Endothelial cell of umbilical vein (primary cell): ENCODE measurements at regions of chr11 and their contacts with region 1.

Region 1: GRCh38 chr11:65711785-65712632 is at the start of gene KAT5:
- DNase-seq: peak; percentile 98
- H3K4me3 ChIP-seq: peak within 1 kb of the TSS; percentile 19 to 66 (median 49)
- H3K27ac ChIP-seq: peak within 1 kb of the TSS; percentile 89
- H3K4me1 ChIP-seq: peaks cover 6% of the 10 kb centered on the region
- H3K27me3 ChIP-seq: no peaks in the 10 kb centered on the region
- CTCF ChIP-seq: peak; percentile 93 to 97
- POLR2A ChIP-seq: no peak
- total RNA-seq, gene KAT5: 48.8 and 50.2 TPM in 2 replicates

Region 2: GRCh38 chr11:65497141-65498041 is 214.6 kb before region 1 on chr11:
- CTCF ChIA-PET with region 1: no interaction called
- POLR2A ChIA-PET with region 1: no interaction called
- dilution Hi-C with region 1: no loop called
- intact Hi-C with region 1: no loop called
- DNase-seq: peak; percentile 99
- H3K4me3 ChIP-seq: peak overlapping the region; percentile 0 to 91 (median 48)
- H3K27ac ChIP-seq: peak overlapping the region; percentile 95
- H3K4me1 ChIP-seq: peaks cover 45% of the 10 kb centered on the region
- H3K27me3 ChIP-seq: no peaks in the 10 kb centered on the region
- CTCF ChIP-seq: no peak
- POLR2A ChIP-seq: peak; percentile 98

Region 3: DNA sequence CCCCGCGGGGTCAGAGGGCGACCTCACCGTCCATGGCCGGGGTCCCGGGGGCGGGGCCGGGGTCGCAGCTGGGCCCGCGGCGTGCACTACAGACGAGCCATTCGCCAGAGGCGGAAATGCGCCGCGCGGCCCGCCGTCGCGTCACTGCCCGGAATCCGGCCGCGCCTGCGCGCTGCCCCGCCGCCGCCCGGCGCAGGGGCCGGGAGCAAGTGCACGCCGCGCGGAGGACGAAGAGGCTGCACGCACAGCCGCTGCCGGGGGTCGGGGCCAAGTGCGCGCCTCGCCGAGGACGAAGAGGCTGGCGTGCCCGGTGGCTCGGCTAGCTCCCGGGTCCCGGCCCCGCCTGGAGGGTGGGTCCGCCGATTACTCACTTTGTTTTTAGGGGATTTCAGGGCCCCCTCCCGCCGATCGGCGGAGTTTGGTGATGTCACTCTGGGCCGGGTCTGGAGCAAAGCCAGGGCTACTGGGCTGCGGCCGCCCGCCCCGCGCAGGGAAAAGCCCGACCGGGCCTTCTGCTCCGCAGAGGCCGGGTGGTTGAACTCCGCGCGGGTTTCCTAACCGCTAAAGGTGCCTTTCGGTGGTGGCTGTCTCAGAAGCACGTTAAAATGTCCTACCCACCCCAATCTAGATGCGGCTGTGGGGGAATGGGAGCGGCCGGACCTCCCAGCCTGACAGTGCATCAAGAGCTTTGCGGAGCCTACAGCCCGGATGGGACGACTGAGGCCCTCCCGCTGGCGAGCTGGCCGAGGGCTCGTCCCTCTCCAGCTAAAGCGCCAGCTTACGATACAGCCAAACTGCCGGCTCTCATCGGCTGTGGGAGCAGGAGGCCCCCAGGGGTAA is 49.0 kb before region 1 on chr11 and contains the start of gene RELA:
- CTCF ChIA-PET with region 1: interaction called, 4 read pairs
- POLR2A ChIA-PET with region 1: interaction called, 3 read pairs
- dilution Hi-C with region 1: no loop called
- intact Hi-C with region 1: loop called (anchors 1 kb)
- DNase-seq: peak; percentile 92
- H3K4me3 ChIP-seq: peak within 1 kb of the TSS; percentile 34 to 94 (median 77)
- H3K27ac ChIP-seq: peak within 1 kb of the TSS; percentile 91
- H3K4me1 ChIP-seq: peaks cover 18% of the 10 kb centered on the region
- H3K27me3 ChIP-seq: no peaks in the 10 kb centered on the region
- CTCF ChIP-seq: no peak
- POLR2A ChIP-seq: peak; percentile 87
- total RNA-seq, gene RELA: 105 and 106 TPM in 2 replicates

Region 4: DNA sequence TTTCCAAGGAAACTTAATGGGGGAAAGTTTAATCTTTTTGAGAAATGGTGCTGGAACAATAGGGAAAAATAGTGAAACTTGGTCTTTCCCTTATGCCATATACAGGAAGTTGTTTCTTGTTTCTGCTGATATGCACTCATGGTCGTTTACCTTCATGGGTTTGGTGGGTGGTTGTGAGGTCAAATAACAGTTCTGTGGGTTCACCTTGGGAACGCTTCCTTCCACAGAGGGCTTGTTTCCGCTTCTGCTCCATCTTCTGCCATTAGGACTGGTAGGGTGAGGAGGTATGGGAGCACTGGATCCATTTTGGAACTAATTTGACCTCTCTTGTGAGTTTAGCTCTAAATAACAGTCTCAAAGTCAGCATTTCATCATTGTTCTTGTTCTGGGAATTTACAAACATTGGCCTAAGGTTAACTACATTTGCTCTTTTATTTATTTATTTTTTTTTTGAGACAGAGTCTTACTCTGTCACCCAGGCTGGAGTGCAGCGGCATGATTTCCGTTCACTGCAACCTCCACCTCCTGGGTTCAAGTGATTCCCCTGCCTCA is 31.7 kb before region 1 on chr11:
- CTCF ChIA-PET with region 1: interaction called, 10 read pairs
- POLR2A ChIA-PET with region 1: no interaction called
- dilution Hi-C with region 1: no loop called
- intact Hi-C with region 1: no loop called
- DNase-seq: no peak
- H3K4me3 ChIP-seq: no peak overlapping the region
- H3K27ac ChIP-seq: no peak overlapping the region
- H3K4me1 ChIP-seq: no peaks in the 10 kb centered on the region
- H3K27me3 ChIP-seq: peaks cover 11% of the 10 kb centered on the region in 2 experiments
- CTCF ChIP-seq: no peak
- POLR2A ChIP-seq: no peak

Region 5: DNA sequence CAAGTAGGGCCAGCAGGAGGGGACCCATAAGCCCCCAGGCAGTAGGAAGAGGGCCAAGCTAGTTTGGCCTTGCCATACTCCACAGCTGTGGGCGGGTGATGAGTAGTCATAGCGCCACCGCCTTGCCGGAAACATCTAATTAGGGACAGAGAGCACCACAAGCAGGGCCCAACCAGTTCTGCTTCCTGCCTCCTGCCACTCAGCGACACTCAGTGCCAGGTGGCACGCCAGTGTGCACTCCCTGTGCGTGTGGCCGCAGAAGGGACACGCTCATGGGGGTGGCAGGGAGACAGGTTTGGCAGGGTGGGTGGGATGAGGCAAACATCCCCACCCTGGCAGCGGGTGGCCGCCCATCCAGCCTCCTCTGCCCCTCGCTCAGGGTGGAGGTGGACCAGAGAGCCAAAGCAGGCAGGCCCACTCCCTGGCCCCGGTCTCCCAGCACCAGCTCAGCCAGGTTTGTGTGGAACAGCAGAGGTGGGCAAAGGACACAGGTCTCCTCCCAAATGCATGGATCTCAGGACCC is 79.7 kb after region 1 on chr11:
- CTCF ChIA-PET with region 1: no interaction called
- POLR2A ChIA-PET with region 1: no interaction called
- dilution Hi-C with region 1: no loop called
- intact Hi-C with region 1: no loop called
- DNase-seq: no peak
- H3K4me3 ChIP-seq: no peak overlapping the region
- H3K27ac ChIP-seq: no peak overlapping the region
- H3K4me1 ChIP-seq: no peaks in the 10 kb centered on the region
- H3K27me3 ChIP-seq: peaks cover 25 to 26% of the 10 kb centered on the region in 2 experiments
- CTCF ChIP-seq: no peak
- POLR2A ChIP-seq: no peak

Region 6: DNA sequence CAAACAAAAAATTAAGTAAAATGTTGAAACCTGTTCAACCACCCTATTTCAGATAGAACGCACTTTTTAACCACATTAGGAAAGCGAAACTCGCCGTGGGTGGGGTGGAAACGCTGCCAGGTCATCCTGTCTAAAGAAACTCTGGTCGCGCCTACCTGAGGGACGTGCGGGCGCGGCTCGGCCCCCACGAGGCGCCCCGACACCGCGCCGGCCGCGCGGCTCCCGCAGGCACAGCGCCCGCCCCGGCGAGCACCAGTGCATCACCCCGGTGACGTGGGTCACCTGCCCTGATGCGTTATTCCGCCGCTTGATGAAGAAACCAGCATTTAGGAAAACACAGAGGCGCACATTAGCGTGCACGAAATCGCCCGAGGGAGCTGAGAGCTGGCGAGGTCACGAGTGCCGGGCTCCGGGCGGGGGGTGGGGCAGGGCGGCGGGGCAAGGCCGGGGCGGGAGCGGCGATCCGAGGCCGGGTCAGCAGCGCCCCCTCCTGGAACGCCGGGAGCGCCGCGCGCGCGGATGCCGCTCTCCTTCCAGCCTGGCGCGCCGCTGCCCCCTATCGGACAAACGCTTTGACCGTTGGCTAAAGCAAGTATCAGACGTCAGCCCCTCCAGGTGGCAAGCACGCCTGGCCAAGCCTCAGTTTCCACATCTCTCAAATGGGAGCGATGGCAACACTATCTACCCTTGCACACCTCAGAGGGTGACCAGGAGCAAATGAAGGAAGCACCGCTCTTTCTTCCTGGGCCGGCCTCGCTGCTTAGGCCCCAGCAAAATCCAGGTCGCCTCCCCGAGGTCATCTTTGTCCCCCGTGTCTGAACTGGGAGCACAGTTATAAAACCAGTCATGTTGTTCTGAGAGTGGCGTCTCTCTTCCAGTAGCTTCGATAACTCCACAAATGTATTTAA is 106.1 kb after region 1 on chr11:
- CTCF ChIA-PET with region 1: interaction called, 20 read pairs
- POLR2A ChIA-PET with region 1: interaction called, 5 read pairs
- dilution Hi-C with region 1: no loop called
- intact Hi-C with region 1: loop called (anchors 1 kb)
- DNase-seq: peak; percentile 80
- H3K4me3 ChIP-seq: peak overlapping the region; percentile 13 to 74 (median 66)
- H3K27ac ChIP-seq: no peak overlapping the region
- H3K4me1 ChIP-seq: no peaks in the 10 kb centered on the region
- H3K27me3 ChIP-seq: peaks cover 0 to 2% of the 10 kb centered on the region in 2 experiments
- CTCF ChIP-seq: peak; percentile 97 to 99
- POLR2A ChIP-seq: no peak